ENCODE measurements at regions of chr11 and their contacts with region 1.

Region 1: GRCh38 chr11:61871158-61871597 is 20.2 kb downstream of the FADS3 start:
- DNase-seq: peak; percentile 64 to 79
- H3K4me3 ChIP-seq: no peak overlapping the region
- H3K4me3 Mint-ChIP-seq: no peak overlapping the region
- H3K27ac Mint-ChIP-seq: no peak overlapping the region
- H3K4me1 ChIP-seq: peaks cover 12% of the 10 kb centered on the region
- H3K4me1 Mint-ChIP-seq: no peaks in the 10 kb centered on the region
- H3K27me3 ChIP-seq: no peaks in the 10 kb centered on the region
- H3K27me3 Mint-ChIP-seq: no peaks in the 10 kb centered on the region
- CTCF ChIP-seq: peak; percentile 83 to 86

Region 2: DNA sequence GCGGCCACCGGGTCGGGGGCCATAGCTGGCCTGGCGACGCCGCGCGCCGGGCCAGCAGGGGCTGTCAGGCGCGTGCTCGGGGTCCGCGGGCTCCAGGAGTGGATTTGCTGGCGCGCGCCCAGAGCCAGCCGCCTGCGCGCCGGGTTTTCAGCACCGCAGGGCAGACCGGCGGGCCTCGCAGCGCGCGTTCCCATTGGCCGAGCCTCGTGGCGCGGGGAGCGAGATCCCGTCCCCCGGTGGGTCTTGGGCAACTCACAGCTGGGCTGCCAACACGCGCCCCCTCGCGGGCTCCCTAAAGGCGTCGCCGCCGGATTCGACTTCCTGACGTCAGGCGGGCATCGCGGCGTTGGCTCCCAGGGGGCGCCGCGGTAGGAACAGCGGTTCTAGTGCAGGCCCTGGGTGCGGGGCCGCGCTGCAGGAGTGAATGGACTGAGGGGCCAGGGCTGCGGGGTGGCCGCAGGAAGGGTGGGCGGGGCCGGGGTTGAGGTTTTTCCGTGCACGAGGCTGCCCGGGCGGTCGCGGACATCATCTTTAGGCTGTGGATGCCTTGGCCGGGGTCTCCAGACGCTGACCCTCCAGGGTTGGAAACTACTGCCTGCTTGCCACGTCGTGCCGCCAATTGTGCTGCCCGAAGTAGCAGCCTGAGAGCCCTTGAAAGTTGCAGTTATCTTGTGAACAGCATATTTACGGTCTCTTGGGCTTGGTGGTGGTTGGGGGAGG is 54.3 kb before region 1 on chr11 and contains the start of gene FADS1:
- CTCF ChIA-PET with region 1: no interaction called
- POLR2A ChIA-PET with region 1: no interaction called
- intact Hi-C with region 1: no loop called
- DNase-seq: peak; percentile 98 to 99
- H3K4me3 ChIP-seq: peak within 1 kb of the TSS; percentile 85
- H3K4me3 Mint-ChIP-seq: peak within 1 kb of the TSS; percentile 81
- H3K27ac Mint-ChIP-seq: peak within 1 kb of the TSS; percentile 90
- H3K4me1 ChIP-seq: peaks cover 16% of the 10 kb centered on the region
- H3K4me1 Mint-ChIP-seq: peaks cover 18% of the 10 kb centered on the region
- H3K27me3 ChIP-seq: no peaks in the 10 kb centered on the region
- H3K27me3 Mint-ChIP-seq: no peaks in the 10 kb centered on the region
- CTCF ChIP-seq: peak; percentile 72 to 95
- total RNA-seq, gene FADS1: 108 and 116 TPM in 2 replicates

Region 3: GRCh38 chr11:61891331-61892084 is 20.3 kb after region 1 on chr11 and contains the start of gene FADS3:
- CTCF ChIA-PET with region 1: no interaction called
- POLR2A ChIA-PET with region 1: no interaction called
- intact Hi-C with region 1: loop called (anchors 1 kb)
- DNase-seq: peak; percentile 92 to 96
- H3K4me3 ChIP-seq: peak within 1 kb of the TSS; percentile 90
- H3K4me3 Mint-ChIP-seq: peak within 1 kb of the TSS; percentile 91
- H3K27ac Mint-ChIP-seq: peak within 1 kb of the TSS; percentile 64
- H3K4me1 ChIP-seq: peaks cover 8% of the 10 kb centered on the region
- H3K4me1 Mint-ChIP-seq: no peaks in the 10 kb centered on the region
- H3K27me3 ChIP-seq: no peaks in the 10 kb centered on the region
- H3K27me3 Mint-ChIP-seq: no peaks in the 10 kb centered on the region
- CTCF ChIP-seq: peak in 1 of 2 experiments; percentile 32
- total RNA-seq, gene FADS3: 26.1 and 32.7 TPM in 2 replicates